Mammary epithelial cell (primary cell): ENCODE measurements at regions of chr6 and their contacts with region 1.

Region 1: DNA sequence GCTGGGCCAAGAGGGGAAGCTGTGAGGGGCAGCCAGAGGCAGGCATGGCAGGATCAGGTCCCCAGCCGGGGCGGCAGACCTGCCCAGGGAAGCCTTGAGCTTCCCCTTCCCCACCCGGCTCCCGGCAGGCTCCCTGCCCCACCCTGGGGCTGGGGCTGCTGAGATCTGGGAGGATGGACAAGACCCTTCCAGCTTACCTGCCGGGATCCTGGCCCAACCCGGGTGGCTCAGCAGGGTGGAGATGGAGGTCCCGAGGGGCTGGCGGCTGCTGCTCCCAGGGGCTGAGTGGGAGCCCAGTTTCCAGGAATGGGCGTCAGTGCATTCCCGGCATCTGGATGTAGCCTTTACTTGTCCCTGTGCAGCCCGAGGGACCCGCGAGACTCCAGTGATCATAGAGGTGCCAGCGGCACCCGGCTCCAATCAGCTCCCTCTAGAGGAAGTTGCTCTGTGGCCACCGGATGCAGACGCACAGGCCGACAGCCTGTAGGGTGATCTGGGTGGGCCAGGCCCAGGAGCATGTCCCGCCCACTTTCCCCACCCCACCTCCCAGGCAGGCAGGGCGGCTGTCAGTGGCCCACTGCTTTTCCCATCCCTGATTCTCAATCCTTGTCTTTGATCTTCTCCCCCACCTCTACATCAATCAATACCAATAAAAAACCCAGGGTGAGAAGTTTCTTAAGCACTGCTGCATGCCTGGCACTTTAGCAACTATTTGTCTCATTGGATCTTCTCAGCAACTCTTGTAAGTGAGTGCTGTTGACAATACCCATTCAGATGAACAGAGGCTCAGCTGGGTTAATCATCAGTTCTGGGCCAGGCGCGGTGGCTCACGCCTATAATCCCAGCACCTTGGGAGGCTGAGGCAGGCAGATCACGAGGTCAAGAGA is at the start of gene BAK1:
- DNase-seq: peak; percentile 83
- H3K4me3 ChIP-seq: peak within 1 kb of the TSS; percentile 81 to 89 (median 86)
- H3K27ac ChIP-seq: peak within 1 kb of the TSS; percentile 67
- H3K4me1 ChIP-seq: peaks cover 28% of the 10 kb centered on the region
- H3K27me3 ChIP-seq: no peaks in the 10 kb centered on the region
- CTCF ChIP-seq: peak; percentile 11 to 65
- total RNA-seq, gene BAK1: 41.0 to 70.6 TPM

Region 2: GRCh38 chr6:33271458-33272274 is 308.4 kb before region 1 on chr6 and contains the starts of genes RPS18 and VPS52:
- CTCF ChIA-PET with region 1: no interaction called
- dilution Hi-C with region 1: no loop called
- in situ Hi-C with region 1: no loop called
- intact Hi-C with region 1: loop called (anchors 10 kb)
- DNase-seq: peak; percentile 96
- H3K4me3 ChIP-seq: peak within 1 kb of the TSS; percentile 73 to 82 (median 75)
- H3K27ac ChIP-seq: peak within 1 kb of the TSS; percentile 91
- H3K4me1 ChIP-seq: peaks cover 39% of the 10 kb centered on the region
- H3K27me3 ChIP-seq: no peaks in the 10 kb centered on the region
- CTCF ChIP-seq: peak in 1 of 2 donors; percentile 5
- total RNA-seq, gene RPS18: 2,176 to 2,484 TPM
- total RNA-seq, gene VPS52: 34.0 to 40.2 TPM

Region 3: DNA sequence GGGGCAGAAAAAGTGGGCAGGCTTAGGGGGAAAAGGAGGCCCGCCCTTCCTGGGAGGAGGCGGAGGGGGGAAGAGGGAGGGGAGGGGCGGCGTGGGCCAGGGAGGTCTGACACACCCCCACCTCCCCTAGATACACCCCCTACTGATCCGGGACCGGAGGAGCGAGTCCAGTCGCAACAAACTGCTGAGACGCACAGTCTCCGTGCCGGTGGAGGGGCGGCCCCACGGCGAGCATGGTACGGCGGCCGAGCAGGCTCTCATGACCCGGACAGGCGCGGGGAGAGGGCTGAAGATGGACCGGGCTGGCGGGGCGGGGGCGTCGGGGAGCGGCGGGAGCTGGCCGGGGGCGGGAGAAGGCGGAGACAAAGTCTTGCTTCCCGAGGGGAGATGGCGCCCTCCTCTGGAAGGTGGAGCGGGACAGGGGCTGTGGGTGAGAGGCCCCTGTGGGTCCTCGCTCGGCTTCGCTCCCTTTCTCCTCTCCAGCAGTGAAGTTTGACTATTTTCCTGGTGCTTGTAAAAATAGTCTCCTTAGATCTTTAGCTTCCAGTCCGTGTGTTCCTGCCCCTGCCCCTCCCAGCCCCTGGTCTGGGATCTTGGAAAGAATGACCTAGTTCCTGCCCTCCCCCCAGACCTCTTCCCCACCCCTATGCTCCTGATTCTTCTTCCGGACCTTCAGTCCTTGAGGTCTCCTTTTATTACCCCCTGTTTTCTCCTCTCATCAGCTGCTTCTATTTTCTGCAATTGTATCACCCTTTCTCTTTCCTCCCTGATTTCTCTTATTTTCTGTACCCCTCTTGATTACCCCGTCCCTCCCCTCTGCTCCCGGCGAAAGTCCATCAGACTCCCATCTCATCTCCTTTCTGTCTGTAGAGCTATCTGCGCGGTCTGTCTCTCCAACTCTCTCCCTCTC is 154.1 kb before region 1 on chr6:
- CTCF ChIA-PET with region 1: no interaction called
- dilution Hi-C with region 1: no loop called
- in situ Hi-C with region 1: no loop called
- intact Hi-C with region 1: loop called (anchors 2 kb)
- DNase-seq: peak; percentile 82
- H3K4me3 ChIP-seq: peak overlapping the region; percentile 55 to 72 (median 68)
- H3K27ac ChIP-seq: peak overlapping the region; percentile 68
- H3K4me1 ChIP-seq: peaks cover 42% of the 10 kb centered on the region
- H3K27me3 ChIP-seq: no peaks in the 10 kb centered on the region
- CTCF ChIP-seq: peak; percentile 36 to 81

Region 4: GRCh38 chr6:33454009-33454946 is 125.8 kb before region 1 on chr6 and contains the start of gene ZBTB9:
- CTCF ChIA-PET with region 1: interaction called, 11 read pairs
- dilution Hi-C with region 1: no loop called
- in situ Hi-C with region 1: no loop called
- intact Hi-C with region 1: loop called (anchors 1 kb)
- DNase-seq: peak; percentile 96
- H3K4me3 ChIP-seq: peak within 1 kb of the TSS; percentile 73 to 97 (median 92)
- H3K27ac ChIP-seq: peak within 1 kb of the TSS; percentile 61
- H3K4me1 ChIP-seq: peaks cover 5% of the 10 kb centered on the region
- H3K27me3 ChIP-seq: no peaks in the 10 kb centered on the region
- CTCF ChIP-seq: no peak
- total RNA-seq, gene ZBTB9: 5.7 to 10.3 TPM

Region 5: GRCh38 chr6:33481189-33481588 is 98.9 kb before region 1 on chr6:
- CTCF ChIA-PET with region 1: no interaction called
- dilution Hi-C with region 1: no loop called
- in situ Hi-C with region 1: no loop called
- intact Hi-C with region 1: no loop called
- DNase-seq: no peak
- H3K4me3 ChIP-seq: no peak overlapping the region
- H3K27ac ChIP-seq: no peak overlapping the region
- H3K4me1 ChIP-seq: no peaks in the 10 kb centered on the region
- H3K27me3 ChIP-seq: no peaks in the 10 kb centered on the region
- CTCF ChIP-seq: no peak

Region 6: GRCh38 chr6:33672808-33673207 is 92.7 kb after region 1 on chr6:
- CTCF ChIA-PET with region 1: interaction called, 6 read pairs
- dilution Hi-C with region 1: no loop called
- in situ Hi-C with region 1: loop called in 1 of 2 experiments (anchors 10 kb)
- intact Hi-C with region 1: loop called (anchors 1 kb)
- DNase-seq: peak; percentile 88
- H3K4me3 ChIP-seq: no peak overlapping the region
- H3K27ac ChIP-seq: no peak overlapping the region
- H3K4me1 ChIP-seq: peaks cover 16% of the 10 kb centered on the region
- H3K27me3 ChIP-seq: no peaks in the 10 kb centered on the region
- CTCF ChIP-seq: peak in 1 of 2 donors; percentile 59

Region 7: GRCh38 chr6:33711140-33712129 is 131.4 kb after region 1 on chr6 and contains the start of gene UQCC2:
- CTCF ChIA-PET with region 1: no interaction called
- dilution Hi-C with region 1: loop called (anchors 10 kb)
- in situ Hi-C with region 1: loop called in 1 of 2 experiments (anchors 10 kb)
- intact Hi-C with region 1: no loop called
- DNase-seq: peak; percentile 93
- H3K4me3 ChIP-seq: peak within 1 kb of the TSS; percentile 81 to 97 (median 84)
- H3K27ac ChIP-seq: peak within 1 kb of the TSS; percentile 91
- H3K4me1 ChIP-seq: peaks cover 23% of the 10 kb centered on the region
- H3K27me3 ChIP-seq: no peaks in the 10 kb centered on the region
- CTCF ChIP-seq: peak; percentile 63 to 88
- total RNA-seq, gene UQCC2: 12.3 to 65.2 TPM

Region 8: DNA sequence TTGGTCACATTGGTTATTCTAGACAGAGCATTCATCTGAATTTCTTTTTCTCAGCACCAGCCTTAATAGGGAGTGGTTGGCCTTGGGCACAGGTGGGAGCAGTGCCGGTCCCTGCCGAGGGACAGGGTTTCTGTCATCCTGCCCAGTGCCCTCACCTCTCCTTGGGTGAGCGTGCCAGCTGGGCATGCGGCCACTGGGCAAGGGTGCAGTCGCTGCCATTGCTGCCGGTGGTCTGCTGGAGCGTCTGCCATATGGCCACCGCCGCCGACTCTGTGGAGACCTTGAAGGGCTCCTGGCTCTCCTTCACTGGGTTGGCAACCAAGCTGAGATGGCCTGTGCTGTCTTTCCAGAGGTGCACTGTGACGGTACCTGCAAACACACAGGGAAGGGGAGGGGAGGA is 147.9 kb after region 1 on chr6:
- CTCF ChIA-PET with region 1: no interaction called
- dilution Hi-C with region 1: no loop called
- in situ Hi-C with region 1: no loop called
- intact Hi-C with region 1: no loop called
- DNase-seq: no peak
- H3K4me3 ChIP-seq: no peak overlapping the region
- H3K27ac ChIP-seq: no peak overlapping the region
- H3K4me1 ChIP-seq: peaks cover 3% of the 10 kb centered on the region
- H3K27me3 ChIP-seq: peaks cover 3% of the 10 kb centered on the region
- CTCF ChIP-seq: no peak

Region 9: GRCh38 chr6:33751771-33752645 is 171.9 kb after region 1 on chr6:
- CTCF ChIA-PET with region 1: interaction called, 12 read pairs
- dilution Hi-C with region 1: no loop called
- in situ Hi-C with region 1: loop called in 1 of 2 experiments (anchors 10 kb)
- intact Hi-C with region 1: no loop called
- DNase-seq: peak; percentile 39
- H3K4me3 ChIP-seq: no peak overlapping the region
- H3K27ac ChIP-seq: no peak overlapping the region
- H3K4me1 ChIP-seq: peaks cover 21% of the 10 kb centered on the region
- H3K27me3 ChIP-seq: no peaks in the 10 kb centered on the region
- CTCF ChIP-seq: no peak

Region 10: DNA sequence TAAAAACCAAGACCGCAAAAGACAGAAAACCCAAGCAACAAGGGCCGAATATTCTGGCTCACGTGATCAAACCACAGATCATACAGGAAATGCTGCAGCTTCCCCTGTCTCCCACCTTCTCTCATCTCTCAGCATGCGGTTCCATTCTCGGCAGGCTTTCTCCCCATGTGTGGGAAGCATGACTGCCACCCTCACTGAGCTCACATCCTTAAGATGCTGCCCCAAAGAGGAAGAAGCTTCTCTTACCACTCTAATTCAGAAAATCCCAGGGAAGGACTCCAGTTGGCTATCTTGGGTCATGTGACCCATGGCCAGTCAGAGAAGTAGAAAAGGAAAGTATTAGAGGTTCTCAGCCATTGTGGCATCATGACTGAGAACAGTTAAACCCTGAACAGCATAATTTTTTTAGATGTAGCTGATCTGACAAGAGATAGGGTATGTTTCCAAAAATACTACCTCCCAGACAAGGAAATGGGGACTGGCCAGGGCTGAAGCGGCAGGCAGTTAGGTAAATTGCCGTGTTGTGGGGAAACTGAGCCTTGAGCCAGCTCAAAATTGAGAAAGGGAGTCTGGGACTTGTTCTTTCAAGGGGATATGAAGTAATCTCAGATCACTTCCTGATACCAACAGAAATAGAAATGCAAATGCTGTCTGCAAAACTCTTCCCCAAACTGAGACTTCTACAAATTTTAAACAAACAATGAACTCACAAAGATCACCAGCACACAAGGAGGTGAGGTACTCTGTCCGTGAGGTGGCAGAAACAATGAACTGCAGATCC is 602.9 kb after region 1 on chr6:
- CTCF ChIA-PET with region 1: no interaction called
- dilution Hi-C with region 1: no loop called
- in situ Hi-C with region 1: no loop called
- intact Hi-C with region 1: no loop called
- DNase-seq: no peak
- H3K4me3 ChIP-seq: no peak overlapping the region
- H3K27ac ChIP-seq: no peak overlapping the region
- H3K4me1 ChIP-seq: no peaks in the 10 kb centered on the region
- H3K27me3 ChIP-seq: no peaks in the 10 kb centered on the region
- CTCF ChIP-seq: no peak